AG04449 (cell line): ENCODE measurements at regions of chr1 and their contacts with region 1.

Region 1: GRCh38 chr1:34162852-34163766 is 1.9 kb downstream of the CSMD2 start:
- DNase-seq: peak; percentile 87
- H3K4me3 ChIP-seq: peak overlapping the region; percentile 75
- CTCF ChIP-seq: peak; percentile 91

Region 2: GRCh38 chr1:33641104-33641830 is 521.8 kb before region 1 on chr1:
- CTCF ChIA-PET with region 1: interaction called, 29 read pairs
- POLR2A ChIA-PET with region 1: no interaction called
- DNase-seq: no peak
- H3K4me3 ChIP-seq: no peak overlapping the region
- CTCF ChIP-seq: peak; percentile 48

Region 3: DNA sequence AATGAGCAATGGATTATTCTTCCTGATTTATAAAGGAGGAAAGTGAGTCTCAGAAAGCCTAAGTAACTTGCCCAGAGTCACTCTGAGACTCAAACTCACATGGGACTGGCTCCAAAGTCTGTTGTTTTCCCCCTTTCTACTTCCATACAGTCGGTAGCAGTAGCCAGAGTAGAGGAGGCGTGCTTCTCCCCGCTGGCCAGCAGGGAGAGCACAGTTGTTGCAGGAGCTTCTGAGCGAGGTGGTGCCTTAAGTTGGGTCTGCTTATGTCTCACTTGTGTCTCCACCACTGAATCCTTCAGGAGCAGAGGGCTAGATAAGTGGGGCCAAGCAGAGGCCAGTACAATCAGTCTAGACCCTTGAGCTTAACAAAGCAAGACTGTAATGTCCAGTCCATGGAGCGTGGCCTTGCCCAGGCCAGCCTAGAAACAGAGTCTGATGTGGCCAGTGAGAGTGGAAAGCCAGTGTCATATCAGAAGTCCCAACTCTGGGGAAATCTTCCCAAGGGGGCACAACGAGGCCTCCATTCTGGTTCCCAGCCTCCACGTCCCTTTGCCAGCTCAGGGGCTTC is 508.8 kb before region 1 on chr1:
- CTCF ChIA-PET with region 1: interaction called, 20 read pairs
- POLR2A ChIA-PET with region 1: no interaction called
- DNase-seq: no peak
- H3K4me3 ChIP-seq: no peak overlapping the region
- CTCF ChIP-seq: peak; percentile 77

Region 4: GRCh38 chr1:33724348-33724747 is 438.8 kb before region 1 on chr1:
- CTCF ChIA-PET with region 1: interaction called, 10 read pairs
- POLR2A ChIA-PET with region 1: no interaction called
- DNase-seq: no peak
- H3K4me3 ChIP-seq: no peak overlapping the region
- CTCF ChIP-seq: no peak

Region 5: GRCh38 chr1:33735621-33736020 is 427.5 kb before region 1 on chr1:
- CTCF ChIA-PET with region 1: interaction called, 114 read pairs
- POLR2A ChIA-PET with region 1: interaction called, 4 read pairs
- DNase-seq: no peak
- H3K4me3 ChIP-seq: no peak overlapping the region
- CTCF ChIP-seq: peak; percentile 3